IMR-90 (cell line): ENCODE measurements at regions of chr7 and their contacts with region 1.

Region 1: DNA sequence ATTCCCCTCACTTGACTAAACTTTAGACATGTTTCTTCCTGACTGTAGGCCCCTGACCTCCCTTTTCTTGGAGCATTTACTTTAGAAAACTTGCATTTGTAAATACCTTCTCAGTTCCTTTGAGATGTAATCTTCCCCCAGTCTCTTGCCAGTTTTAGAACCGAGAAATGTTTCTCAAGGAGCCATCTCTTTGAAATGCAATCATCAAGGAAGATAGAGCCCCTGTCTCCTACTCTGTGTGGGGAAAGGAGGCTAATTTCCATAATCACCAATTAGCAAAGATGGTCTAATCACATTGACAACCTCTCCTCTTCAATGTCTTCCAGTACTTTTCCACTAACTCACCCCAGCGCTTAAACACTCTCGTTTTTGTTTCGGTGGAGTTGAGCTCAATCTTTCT is 70.0 kb upstream of the SMIM30 start:
- DNase-seq: no peak
- ATAC-seq: no peak; the same call in 1 of the 2 replicates
- H3K4me3 ChIP-seq: no peak overlapping the region
- H3K27ac ChIP-seq: no peak overlapping the region
- H3K4me1 ChIP-seq: peaks cover 3% of the 10 kb centered on the region; the same call in 1 of the 2 replicates
- H3K27me3 ChIP-seq: no peaks in the 10 kb centered on the region
- CTCF ChIP-seq: no peak
- POLR2A ChIP-seq: no peak
- RAD21 ChIP-seq: no peak

Region 2: GRCh38 chr7:113209449-113210203 is 21.2 kb after region 1 on chr7:
- CTCF ChIA-PET with region 1: no interaction called
- POLR2A ChIA-PET with region 1: no interaction called
- dilution Hi-C with region 1: no loop called
- in situ Hi-C with region 1: no loop called
- intact Hi-C with region 1: loop called (anchors 1 kb)
- DNase-seq: peak; percentile 56
- ATAC-seq: peak; percentile 53; the same call in 1 of the 2 replicates
- H3K4me3 ChIP-seq: no peak overlapping the region
- H3K27ac ChIP-seq: no peak overlapping the region
- H3K4me1 ChIP-seq: no peaks in the 10 kb centered on the region
- H3K27me3 ChIP-seq: no peaks in the 10 kb centered on the region
- CTCF ChIP-seq: no peak
- POLR2A ChIP-seq: no peak
- RAD21 ChIP-seq: no peak

Region 3: DNA sequence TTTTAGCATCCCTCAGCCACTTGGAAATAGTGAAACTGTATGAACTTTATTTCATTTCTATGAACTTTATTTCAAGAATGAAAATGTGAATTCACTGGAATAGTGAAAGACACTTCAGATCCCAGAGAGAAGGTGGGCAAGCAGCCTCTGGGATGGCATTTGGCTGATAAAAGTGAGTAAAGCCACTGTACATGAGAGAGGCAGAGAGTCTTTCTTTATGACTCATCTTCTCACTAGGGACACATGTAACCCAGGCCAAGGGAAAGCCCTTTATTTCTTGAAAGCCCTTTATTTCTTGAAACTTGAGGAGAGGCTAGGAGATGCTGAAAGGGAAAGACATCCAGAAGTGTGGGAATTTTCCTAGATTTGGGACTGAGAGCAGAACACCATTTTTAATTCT is 78.9 kb after region 1 on chr7:
- CTCF ChIA-PET with region 1: no interaction called
- POLR2A ChIA-PET with region 1: no interaction called
- dilution Hi-C with region 1: no loop called
- in situ Hi-C with region 1: no loop called
- intact Hi-C with region 1: no loop called
- DNase-seq: peak; percentile 57
- ATAC-seq: peak; percentile 61
- H3K4me3 ChIP-seq: no peak overlapping the region
- H3K27ac ChIP-seq: no peak overlapping the region
- H3K4me1 ChIP-seq: peaks cover 8% of the 10 kb centered on the region
- H3K27me3 ChIP-seq: no peaks in the 10 kb centered on the region
- CTCF ChIP-seq: no peak
- POLR2A ChIP-seq: no peak
- RAD21 ChIP-seq: no peak